ENCODE measurements at regions of chr20 and their contacts with region 1.

Region 1: GRCh38 chr20:31822421-31823330 is 3.5 kb downstream of the MYLK2 start:
- DNase-seq: peak in 1 of 2 experiments; percentile 76
- H3K4me3 ChIP-seq: no peak overlapping the region
- H3K27ac ChIP-seq: no peak overlapping the region
- H3K4me1 ChIP-seq: no peaks in the 10 kb centered on the region
- H3K27me3 ChIP-seq: no peaks in the 10 kb centered on the region
- CTCF ChIP-seq: peak; percentile 99

Region 2: DNA sequence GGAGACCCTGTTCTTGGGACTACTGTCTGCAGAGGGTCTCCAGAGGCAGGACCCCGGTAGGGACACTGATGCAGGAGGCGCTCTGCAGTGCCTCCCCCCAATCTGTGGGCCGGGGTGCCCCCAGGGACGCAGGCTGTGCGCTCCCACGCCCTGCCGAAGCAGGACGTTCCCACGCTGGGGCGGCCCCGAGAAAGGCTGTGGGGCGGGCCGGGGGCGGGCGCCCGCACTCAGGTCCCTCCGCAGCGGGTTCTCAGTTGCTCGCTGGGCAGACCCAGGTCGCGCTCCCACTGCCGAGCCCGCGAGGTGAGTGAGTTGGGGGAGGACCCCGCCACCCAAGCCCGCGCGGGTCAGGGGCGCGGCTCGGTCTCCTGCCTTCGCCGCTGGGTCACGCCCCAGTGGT is 185.0 kb before region 1 on chr20 and contains the start of gene COX4I2:
- CTCF ChIA-PET with region 1: no interaction called
- POLR2A ChIA-PET with region 1: no interaction called
- intact Hi-C with region 1: no loop called
- DNase-seq: no peak
- H3K4me3 ChIP-seq: no peak within 1 kb of the TSS
- H3K27ac ChIP-seq: no peak within 1 kb of the TSS
- H3K4me1 ChIP-seq: no peaks in the 10 kb centered on the region
- H3K27me3 ChIP-seq: no peaks in the 10 kb centered on the region
- CTCF ChIP-seq: no peak
- total RNA-seq, gene COX4I2: not detected in 2 replicates

Region 3: DNA sequence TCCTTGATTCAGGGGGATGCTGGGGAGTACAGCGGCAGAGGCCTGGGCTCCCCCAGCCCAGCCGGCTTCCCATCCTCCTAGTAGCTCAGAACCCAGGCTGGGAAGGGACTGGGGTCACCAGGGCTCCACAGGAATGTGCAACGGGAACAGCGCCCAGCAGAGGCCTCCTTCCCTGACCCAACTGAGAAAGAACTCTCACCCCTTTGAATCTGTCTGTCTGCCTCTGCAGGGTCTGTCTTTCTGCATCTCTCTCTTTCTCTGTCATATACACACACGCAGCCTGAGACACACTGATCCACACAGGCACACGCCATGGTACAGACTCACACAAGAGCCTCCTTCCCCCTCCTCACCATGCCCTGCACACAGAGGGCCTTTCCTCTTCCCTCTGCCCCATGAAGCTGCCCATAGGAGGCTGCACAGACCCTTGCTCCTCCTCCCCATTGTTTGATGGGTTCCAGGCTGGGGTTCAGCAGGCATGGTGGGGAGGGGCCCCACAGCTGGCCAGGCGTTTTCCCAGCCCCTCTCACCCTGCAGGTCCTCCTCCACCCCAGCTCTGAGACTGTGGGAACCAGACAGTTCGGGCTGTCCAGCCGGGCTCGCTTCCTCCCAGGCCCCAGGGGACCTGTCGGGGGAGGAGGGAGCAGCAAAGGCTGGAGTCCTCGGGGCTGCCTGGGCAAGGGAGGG is 19.9 kb after region 1 on chr20:
- CTCF ChIA-PET with region 1: interaction called, 13 read pairs
- POLR2A ChIA-PET with region 1: no interaction called
- intact Hi-C with region 1: loop called (anchors 1 kb)
- DNase-seq: peak in 1 of 2 experiments; percentile 47
- H3K4me3 ChIP-seq: no peak overlapping the region
- H3K27ac ChIP-seq: no peak overlapping the region
- H3K4me1 ChIP-seq: peaks cover 9% of the 10 kb centered on the region
- H3K27me3 ChIP-seq: peaks cover 1% of the 10 kb centered on the region; the same call in 1 of the 2 replicates
- CTCF ChIP-seq: no peak

Region 4: DNA sequence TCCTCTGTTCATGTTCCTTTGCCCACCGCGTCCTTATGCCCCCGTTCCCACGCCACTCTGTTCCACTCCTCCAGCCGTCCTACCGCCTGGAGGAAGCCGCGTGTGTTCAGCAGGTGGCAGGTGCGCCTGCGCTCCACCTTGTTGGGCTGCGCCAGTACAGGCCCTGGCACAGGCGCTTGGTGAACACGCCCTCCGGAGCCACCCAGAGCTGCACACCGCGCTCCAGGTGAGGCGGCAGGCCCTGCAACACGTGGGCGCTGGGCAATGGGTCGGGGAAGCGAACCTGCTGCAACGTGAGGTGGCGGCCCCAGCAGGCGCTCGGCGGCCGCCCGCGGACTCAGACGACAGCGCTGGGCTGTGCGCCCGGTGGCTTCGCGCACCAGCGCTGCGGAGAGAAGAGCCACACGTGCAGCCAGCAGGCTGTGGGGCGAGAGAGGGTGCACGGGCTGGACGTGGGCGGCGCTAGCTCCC is 26.8 kb after region 1 on chr20:
- CTCF ChIA-PET with region 1: interaction called, 13 read pairs
- POLR2A ChIA-PET with region 1: no interaction called
- intact Hi-C with region 1: loop called (anchors 1 kb)
- DNase-seq: peak in 1 of 2 experiments; percentile 54
- H3K4me3 ChIP-seq: no peak overlapping the region
- H3K27ac ChIP-seq: no peak overlapping the region
- H3K4me1 ChIP-seq: no peaks in the 10 kb centered on the region
- H3K27me3 ChIP-seq: peaks cover 33% of the 10 kb centered on the region
- CTCF ChIP-seq: no peak

Region 5: DNA sequence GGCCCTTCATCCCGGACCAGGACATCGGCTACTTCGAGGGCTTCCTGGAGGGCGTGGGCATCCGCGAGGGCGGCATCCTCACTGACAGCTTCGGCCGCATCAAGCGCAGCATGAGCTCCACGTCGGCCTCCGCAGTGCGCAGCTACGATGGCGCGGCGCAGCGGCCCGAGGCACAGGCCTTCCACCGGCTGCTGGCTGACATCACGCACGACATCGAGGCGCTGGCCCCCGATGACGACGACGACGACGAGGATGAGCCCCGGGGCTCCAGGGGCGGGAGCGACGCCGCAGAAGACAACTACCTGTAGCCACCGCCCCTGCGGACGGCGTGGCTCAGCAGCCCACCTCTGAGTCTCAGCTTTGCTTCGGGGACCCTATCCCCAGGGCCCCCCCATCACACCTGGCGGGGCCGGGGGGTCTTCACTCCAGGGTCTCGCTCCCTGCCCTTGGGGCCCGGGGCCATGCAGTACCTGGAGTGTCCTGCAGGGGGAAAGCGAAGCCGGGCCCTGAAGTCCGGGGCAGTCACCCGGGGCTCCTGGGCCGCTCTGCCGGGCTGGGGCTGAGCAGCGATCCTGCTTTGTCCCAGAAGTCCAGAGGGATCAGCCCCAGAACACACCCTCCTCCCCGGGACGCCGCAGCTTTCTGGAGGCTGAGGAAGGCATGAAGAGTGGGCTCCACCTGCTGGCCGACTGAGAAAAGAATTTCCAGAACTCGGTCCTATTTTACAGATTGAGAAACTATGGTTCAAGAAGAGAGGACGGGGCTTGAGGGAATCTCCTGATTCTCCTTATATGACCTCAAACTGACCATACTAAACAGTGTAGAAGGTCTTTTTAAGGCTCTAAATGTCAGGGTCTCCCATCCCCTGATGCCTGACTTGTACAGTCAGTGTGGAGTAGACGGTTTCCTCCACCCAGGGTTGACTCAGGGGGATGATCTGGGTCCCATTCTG is 208.6 kb after region 1 on chr20:
- CTCF ChIA-PET with region 1: interaction called, 5 read pairs
- POLR2A ChIA-PET with region 1: no interaction called
- intact Hi-C with region 1: loop called (anchors 1 kb)
- DNase-seq: peak; percentile 50 to 75
- H3K4me3 ChIP-seq: no peak overlapping the region
- H3K27ac ChIP-seq: no peak overlapping the region
- H3K4me1 ChIP-seq: no peaks in the 10 kb centered on the region
- H3K27me3 ChIP-seq: peaks cover 49% of the 10 kb centered on the region
- CTCF ChIP-seq: peak; percentile 98

Region 6: GRCh38 chr20:32091888-32092346 is 269.2 kb after region 1 on chr20:
- CTCF ChIA-PET with region 1: no interaction called
- POLR2A ChIA-PET with region 1: no interaction called
- intact Hi-C with region 1: loop called (anchors 2 kb)
- DNase-seq: peak; percentile 59 to 83
- H3K4me3 ChIP-seq: no peak overlapping the region
- H3K27ac ChIP-seq: no peak overlapping the region
- H3K4me1 ChIP-seq: no peaks in the 10 kb centered on the region
- H3K27me3 ChIP-seq: peaks cover 40% of the 10 kb centered on the region
- CTCF ChIP-seq: peak; percentile 91

Region 7: GRCh38 chr20:32116079-32116521 is 293.4 kb after region 1 on chr20:
- CTCF ChIA-PET with region 1: no interaction called
- POLR2A ChIA-PET with region 1: no interaction called
- intact Hi-C with region 1: no loop called
- DNase-seq: no peak
- H3K4me3 ChIP-seq: no peak overlapping the region
- H3K27ac ChIP-seq: no peak overlapping the region
- H3K4me1 ChIP-seq: peaks cover under 1% of the 10 kb centered on the region; the same call in 1 of the 2 replicates
- H3K27me3 ChIP-seq: no peaks in the 10 kb centered on the region
- CTCF ChIP-seq: no peak

Region 8: DNA sequence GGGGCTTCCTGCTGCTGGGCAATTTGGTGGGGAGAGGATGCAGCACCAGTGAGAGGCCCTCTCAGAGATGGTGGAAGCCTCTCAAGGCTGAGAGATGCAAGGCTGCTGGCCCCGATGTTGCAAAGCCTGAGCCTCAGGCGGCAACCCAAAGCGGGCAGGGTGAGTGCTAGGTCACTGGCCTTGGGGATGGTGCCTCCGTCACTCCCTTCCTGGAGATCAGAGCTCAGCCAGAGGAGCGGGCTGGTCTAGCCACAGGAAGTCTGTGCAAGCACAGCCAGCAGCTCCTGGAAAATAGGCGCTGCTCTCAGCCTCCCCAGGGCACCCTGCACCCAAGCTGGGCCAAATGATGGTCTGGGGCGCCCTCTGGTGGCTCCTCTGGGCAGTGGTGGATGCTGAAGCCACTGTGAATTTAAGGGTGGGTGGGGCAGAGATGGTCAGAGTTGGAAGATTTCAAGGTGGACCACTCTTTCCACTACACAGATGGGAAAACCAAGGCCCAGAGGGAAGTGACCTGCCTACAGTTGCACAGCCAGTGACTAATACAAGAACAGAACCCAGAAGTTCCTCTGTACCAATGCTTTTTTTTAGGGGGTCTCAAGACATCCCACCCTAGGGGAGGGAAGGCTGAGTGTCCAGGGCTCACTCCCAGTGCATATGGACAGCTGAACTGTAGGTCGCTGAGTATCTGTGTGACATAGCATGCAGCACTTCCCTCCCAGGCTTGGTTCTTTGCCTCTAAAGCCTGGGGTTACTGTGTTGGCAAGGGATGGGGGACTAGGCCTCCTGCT is 830.3 kb after region 1 on chr20:
- CTCF ChIA-PET with region 1: no interaction called
- POLR2A ChIA-PET with region 1: no interaction called
- intact Hi-C with region 1: loop called (anchors 2 kb)
- DNase-seq: peak; percentile 89 to 92
- H3K4me3 ChIP-seq: no peak overlapping the region
- H3K27ac ChIP-seq: no peak overlapping the region
- H3K4me1 ChIP-seq: peaks cover 22% of the 10 kb centered on the region
- H3K27me3 ChIP-seq: no peaks in the 10 kb centered on the region
- CTCF ChIP-seq: peak; percentile 94